ENCODE measurements at regions of chr17 and their contacts with region 1.

Region 1: DNA sequence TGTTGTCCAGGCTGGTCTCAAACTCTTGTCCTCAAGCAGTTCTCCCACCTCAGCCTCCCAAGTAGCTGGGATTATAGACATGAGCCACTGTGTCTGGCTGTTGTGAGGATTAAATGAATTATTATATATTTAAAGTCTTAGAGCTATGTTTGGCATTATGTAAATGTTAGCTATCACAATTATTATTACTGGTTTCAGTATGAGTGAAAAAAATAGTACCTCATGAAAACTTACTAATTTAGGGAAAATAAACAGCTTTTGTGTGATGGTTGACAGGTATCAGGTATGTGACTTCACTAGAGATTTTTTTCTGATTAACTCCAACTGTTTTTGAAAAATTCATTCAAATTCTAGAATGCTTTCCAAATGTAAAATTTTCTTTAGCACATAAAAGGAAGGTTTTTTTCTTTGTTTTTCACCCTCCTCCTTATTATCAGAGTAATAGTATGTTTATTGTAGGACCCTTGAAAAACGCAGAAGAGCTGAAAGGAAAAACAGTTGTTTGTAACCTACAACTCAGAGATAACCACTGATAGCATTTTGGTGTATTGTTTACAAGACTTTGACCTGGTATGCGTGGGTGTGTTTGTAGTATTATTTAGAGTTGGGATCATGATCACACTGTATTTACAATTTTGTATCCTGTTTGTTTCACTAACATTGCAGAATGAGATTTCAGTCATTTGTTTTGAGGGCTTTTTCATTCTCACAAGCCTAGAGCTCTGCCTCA is 13.2 kb downstream of the NLK start:
- DNase-seq: no peak
- H3K4me3 Mint-ChIP-seq: no peak overlapping the region
- H3K27ac Mint-ChIP-seq: no peak overlapping the region
- H3K4me1 Mint-ChIP-seq: peaks cover 20% of the 10 kb centered on the region
- H3K27me3 Mint-ChIP-seq: no peaks in the 10 kb centered on the region

Region 2: GRCh38 chr17:28072936-28073533 is 17.3 kb after region 1 on chr17:
- CTCF ChIA-PET with region 1: interaction called, 11 read pairs
- POLR2A ChIA-PET with region 1: no interaction called
- DNase-seq: no peak
- H3K4me3 Mint-ChIP-seq: no peak overlapping the region
- H3K27ac Mint-ChIP-seq: no peak overlapping the region
- H3K4me1 Mint-ChIP-seq: peaks cover 42% of the 10 kb centered on the region
- H3K27me3 Mint-ChIP-seq: no peaks in the 10 kb centered on the region

Region 3: GRCh38 chr17:28086519-28086918 is 30.8 kb after region 1 on chr17:
- CTCF ChIA-PET with region 1: no interaction called
- POLR2A ChIA-PET with region 1: no interaction called
- DNase-seq: no peak
- H3K4me3 Mint-ChIP-seq: no peak overlapping the region
- H3K27ac Mint-ChIP-seq: no peak overlapping the region
- H3K4me1 Mint-ChIP-seq: no peaks in the 10 kb centered on the region
- H3K27me3 Mint-ChIP-seq: no peaks in the 10 kb centered on the region

Region 4: DNA sequence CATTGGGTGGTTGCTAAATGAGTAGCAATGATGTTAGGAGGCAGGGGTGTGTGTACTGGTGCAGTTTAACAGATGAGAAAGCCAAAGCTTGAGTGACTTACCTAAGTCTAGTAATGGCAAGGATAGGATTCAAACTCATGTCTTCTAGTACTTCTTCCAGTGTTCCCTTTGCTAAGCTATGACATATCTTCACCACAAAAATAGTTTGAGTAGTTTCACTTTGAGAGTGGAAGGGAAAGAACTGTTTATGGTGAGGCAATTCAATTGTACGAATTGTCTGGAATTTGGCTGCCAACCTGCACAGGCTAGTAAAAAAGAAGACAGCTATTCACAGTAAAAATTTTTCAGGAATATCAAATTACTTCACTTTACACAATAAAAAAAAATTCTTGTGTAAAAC is 124.7 kb after region 1 on chr17:
- CTCF ChIA-PET with region 1: no interaction called
- POLR2A ChIA-PET with region 1: no interaction called
- DNase-seq: no peak
- H3K4me3 Mint-ChIP-seq: no peak overlapping the region
- H3K27ac Mint-ChIP-seq: no peak overlapping the region
- H3K4me1 Mint-ChIP-seq: peaks cover 10% of the 10 kb centered on the region
- H3K27me3 Mint-ChIP-seq: no peaks in the 10 kb centered on the region

Measured in activated CD4-positive, alpha-beta T cell treated with anti-CD3 and anti-CD28 coated beads, Interleukin-2, amount 10 ng/mL, durations not matched to agents 7 days and 5 days (primary cell).